Activated B cell treated with CpG ODN at 0.5 μM for 24 hours (primary cell): ENCODE measurements at regions of chr4 and their contacts with region 1.

Region 1: GRCh38 chr4:81631958-81632441 is 160.3 kb upstream of the RASGEF1B start:
- DNase-seq: no peak
- ATAC-seq: peak; percentile 57
- H3K4me3 Mint-ChIP-seq: peak overlapping the region; percentile 15
- H3K27ac Mint-ChIP-seq: peak overlapping the region; percentile 60
- H3K4me1 Mint-ChIP-seq: peaks cover 60% of the 10 kb centered on the region
- H3K27me3 Mint-ChIP-seq: no peaks in the 10 kb centered on the region
- CTCF ChIP-seq: no peak

Region 2: DNA sequence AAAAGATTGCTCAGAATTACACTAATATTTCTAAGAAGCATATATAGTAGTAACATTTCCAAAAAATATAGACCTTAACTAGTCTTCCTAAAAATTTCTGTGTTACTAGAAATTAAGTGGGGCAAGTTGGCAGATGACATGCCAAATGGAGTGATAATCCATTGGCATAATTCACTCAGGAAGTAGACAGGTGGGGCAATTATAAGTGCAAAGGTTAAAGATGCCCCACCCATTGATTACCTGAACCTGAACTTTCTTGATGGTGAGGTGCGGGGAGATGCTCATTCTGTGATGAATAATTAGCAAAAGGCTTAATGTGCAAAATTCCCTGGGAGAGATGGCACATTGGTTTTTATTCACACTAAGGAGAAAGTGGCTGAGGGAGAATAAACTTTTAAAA is 14.5 kb before region 1 on chr4:
- CTCF ChIA-PET with region 1: no interaction called
- POLR2A ChIA-PET with region 1: interaction called, 11 read pairs
- intact Hi-C with region 1: no loop called
- DNase-seq: no peak
- ATAC-seq: no peak
- H3K4me3 Mint-ChIP-seq: no peak overlapping the region
- H3K27ac Mint-ChIP-seq: no peak overlapping the region
- H3K4me1 Mint-ChIP-seq: peaks cover 16% of the 10 kb centered on the region
- H3K27me3 Mint-ChIP-seq: no peaks in the 10 kb centered on the region
- CTCF ChIP-seq: no peak

Region 3: DNA sequence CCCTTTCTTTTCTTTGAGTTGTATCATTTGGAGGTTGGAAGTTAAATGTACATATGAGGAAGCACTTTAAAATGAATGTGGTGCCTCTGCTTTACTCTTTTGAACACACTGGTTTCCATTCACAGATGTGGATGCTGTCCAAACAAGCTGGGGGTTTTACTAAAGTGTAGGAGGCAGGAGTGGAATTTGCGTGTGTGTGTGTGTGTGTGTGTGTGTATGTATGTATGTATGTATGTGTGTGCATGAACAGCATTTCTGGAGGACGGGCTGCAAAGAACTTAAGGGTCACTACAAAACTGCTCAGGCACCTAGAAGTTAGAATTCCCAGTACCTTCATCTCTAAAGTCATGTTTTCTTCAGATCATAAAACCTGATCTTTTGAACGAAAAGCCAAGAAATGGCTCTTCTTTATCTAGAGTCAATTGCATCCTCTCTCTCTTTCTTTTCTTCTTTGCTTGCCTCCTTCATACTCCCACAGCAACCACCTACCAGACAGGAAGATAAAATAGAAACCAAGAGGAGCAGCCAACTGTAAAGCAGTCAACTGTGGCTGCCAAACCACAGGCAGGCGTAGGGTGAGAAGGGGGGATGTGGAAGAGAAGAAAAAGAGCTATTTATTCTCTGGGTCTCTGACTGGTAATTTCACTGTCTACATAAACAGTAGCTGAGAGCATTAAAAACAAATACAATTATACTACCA is 16.7 kb after region 1 on chr4:
- CTCF ChIA-PET with region 1: no interaction called
- POLR2A ChIA-PET with region 1: interaction called, 9 read pairs
- intact Hi-C with region 1: loop called (anchors 2 kb)
- DNase-seq: no peak
- ATAC-seq: peak; percentile 91
- H3K4me3 Mint-ChIP-seq: peak overlapping the region; percentile 21
- H3K27ac Mint-ChIP-seq: peak overlapping the region; percentile 1
- H3K4me1 Mint-ChIP-seq: peaks cover 46% of the 10 kb centered on the region
- H3K27me3 Mint-ChIP-seq: no peaks in the 10 kb centered on the region
- CTCF ChIP-seq: no peak